CD8-positive, alpha-beta T cell (primary cell): ENCODE measurements at regions of chr3 and their contacts with region 1.

Region 1: DNA sequence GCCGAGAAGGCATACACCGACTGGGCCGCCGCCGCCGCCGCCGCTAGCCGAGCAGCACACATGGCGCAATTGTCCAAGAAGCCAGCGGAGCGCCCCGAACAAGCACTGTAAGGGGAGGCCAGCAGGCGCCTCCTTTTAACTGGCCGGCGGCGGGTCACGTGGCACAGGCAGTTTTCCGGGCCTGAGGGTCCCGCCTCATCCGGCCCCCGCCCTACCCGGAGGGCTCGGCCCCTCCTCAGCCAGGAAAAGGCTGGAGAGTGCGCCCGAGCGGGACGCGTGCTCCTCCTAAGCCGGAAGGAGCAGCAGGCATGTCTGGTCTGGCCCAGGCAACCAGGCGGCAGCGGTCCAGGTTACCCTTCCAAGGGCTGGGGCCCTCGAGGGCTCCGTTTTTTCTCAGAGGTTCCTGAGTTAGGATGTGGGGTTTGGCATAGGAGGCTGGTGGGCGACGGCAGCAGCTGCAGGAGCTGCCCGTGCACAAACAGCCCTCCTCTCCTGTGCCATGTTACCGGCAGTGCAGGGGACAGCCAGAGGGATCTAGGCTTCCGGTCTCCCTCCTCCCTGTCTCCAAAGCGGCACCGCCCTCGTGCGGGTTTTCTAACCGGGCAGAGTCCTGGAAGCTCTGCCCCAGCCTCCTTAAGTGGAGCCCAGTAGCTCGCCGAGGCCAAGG is at the start of gene GPX1:
- DNase-seq: peak; percentile 45 to 89 (median 78)
- ATAC-seq: peak; percentile 57
- H3K4me3 ChIP-seq: peak within 1 kb of the TSS; percentile 61 to 73
- H3K4me3 Mint-ChIP-seq: peak within 1 kb of the TSS; percentile 91
- H3K27ac ChIP-seq: peak within 1 kb of the TSS; percentile 62 to 81
- H3K27ac Mint-ChIP-seq: peak within 1 kb of the TSS; percentile 96
- H3K4me1 ChIP-seq: peaks cover 26% of the 10 kb centered on the region
- H3K4me1 Mint-ChIP-seq: peaks cover 41% of the 10 kb centered on the region
- H3K27me3 ChIP-seq: no peaks in the 10 kb centered on the region
- H3K27me3 Mint-ChIP-seq: no peaks in the 10 kb centered on the region
- CTCF ChIP-seq: no peak
- total RNA-seq, gene GPX1: 24.4 to 27.8 TPM

Region 2: GRCh38 chr3:49428697-49429100 is 70.3 kb after region 1 on chr3:
- CTCF ChIA-PET with region 1: no interaction called
- POLR2A ChIA-PET with region 1: interaction called, 5 read pairs
- intact Hi-C with region 1: loop called in 1 of 2 experiments (anchors 1 kb)
- DNase-seq: no peak
- ATAC-seq: peak; percentile 2
- H3K4me3 ChIP-seq: peak overlapping the region; percentile 63 to 85
- H3K4me3 Mint-ChIP-seq: peak overlapping the region; percentile 89
- H3K27ac ChIP-seq: peak overlapping the region; percentile 70 to 86
- H3K27ac Mint-ChIP-seq: peak overlapping the region; percentile 89
- H3K4me1 ChIP-seq: peaks cover 10% of the 10 kb centered on the region
- H3K4me1 Mint-ChIP-seq: peaks cover 14% of the 10 kb centered on the region
- H3K27me3 ChIP-seq: no peaks in the 10 kb centered on the region
- H3K27me3 Mint-ChIP-seq: no peaks in the 10 kb centered on the region
- CTCF ChIP-seq: no peak

Region 3: DNA sequence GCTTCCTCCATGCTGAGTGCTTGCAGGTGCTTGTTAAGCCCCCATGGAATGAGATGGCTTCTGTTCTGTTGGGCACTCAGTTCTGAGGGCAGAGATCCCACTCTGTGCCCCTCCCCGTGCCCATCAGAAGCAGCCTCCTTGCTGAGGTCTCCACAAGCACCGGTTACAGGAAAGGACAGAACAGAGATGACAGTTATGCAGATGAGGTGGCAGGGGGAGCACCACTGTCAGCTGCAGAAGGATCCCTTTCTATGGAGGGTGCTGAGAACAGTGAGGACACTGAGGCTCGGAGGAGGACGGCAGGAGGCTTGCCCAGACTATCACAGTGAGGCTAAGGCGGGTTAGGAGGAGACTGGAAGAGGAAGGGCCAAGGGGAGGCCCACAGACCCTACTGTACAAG is 1132.7 kb after region 1 on chr3:
- CTCF ChIA-PET with region 1: no interaction called
- POLR2A ChIA-PET with region 1: no interaction called
- intact Hi-C with region 1: no loop called
- DNase-seq: no peak
- ATAC-seq: no peak
- H3K4me3 ChIP-seq: no peak overlapping the region
- H3K4me3 Mint-ChIP-seq: no peak overlapping the region
- H3K27ac ChIP-seq: no peak overlapping the region
- H3K27ac Mint-ChIP-seq: no peak overlapping the region
- H3K4me1 ChIP-seq: no peaks in the 10 kb centered on the region
- H3K4me1 Mint-ChIP-seq: peaks cover 12% of the 10 kb centered on the region
- H3K27me3 ChIP-seq: no peaks in the 10 kb centered on the region
- H3K27me3 Mint-ChIP-seq: no peaks in the 10 kb centered on the region
- CTCF ChIP-seq: no peak